Prostate gland (tissue), 2 donors: ENCODE measurements at regions of chr13 and their contacts with region 1.

Region 1: DNA sequence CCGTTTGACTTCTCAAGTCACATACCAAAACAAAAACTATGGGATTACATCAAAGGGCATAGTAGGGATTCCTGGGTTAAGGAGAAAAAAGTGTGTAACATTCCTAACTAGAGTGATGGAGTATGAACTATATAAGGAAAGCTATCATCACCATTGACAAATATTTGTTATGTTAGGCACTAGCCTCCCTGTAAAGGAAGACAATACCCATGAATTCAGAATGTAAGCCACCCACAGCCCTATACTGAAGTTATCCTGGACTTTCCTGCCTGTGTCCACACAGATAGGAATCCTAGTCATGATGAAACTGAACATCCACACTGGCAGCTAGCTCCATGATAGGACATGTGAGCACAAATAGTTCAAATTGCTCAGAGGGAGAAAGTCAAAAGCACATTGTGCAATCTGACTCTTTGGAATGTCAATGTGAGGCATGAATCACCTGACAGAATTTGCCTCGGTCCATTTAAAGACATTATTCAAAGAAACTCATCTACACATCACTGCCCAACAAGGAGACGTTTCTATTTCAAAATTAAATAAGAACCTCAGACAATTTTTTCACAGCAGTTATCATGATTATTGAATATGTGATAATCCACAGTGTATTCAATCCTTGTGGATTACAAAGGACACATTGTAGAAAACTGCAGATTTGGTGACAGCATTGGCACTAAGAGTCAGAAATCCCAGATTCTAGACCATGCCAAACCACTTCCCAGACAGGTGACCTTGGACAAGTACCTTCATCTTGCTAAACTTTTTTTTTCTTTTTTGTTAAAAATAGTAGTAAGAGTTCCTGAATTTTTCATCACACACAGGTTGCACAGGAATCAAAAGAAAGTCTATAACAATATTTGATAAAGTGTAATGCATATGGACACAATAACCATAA is 529.3 kb downstream of the IRS2 start:
- DNase-seq: peak; percentile 5
- H3K4me3 ChIP-seq: no peak overlapping the region
- H3K27ac ChIP-seq: peak overlapping the region in 1 of 2 donors; percentile 32
- H3K4me1 ChIP-seq: no peaks in the 10 kb centered on the region
- H3K27me3 ChIP-seq: no peaks in the 10 kb centered on the region
- CTCF ChIP-seq: no peak
- POLR2A ChIP-seq: no peak

Region 2: GRCh38 chr13:109010912-109011311 is 246.2 kb before region 1 on chr13:
- intact Hi-C with region 1: no loop called
- DNase-seq: no peak
- H3K4me3 ChIP-seq: no peak overlapping the region
- H3K27ac ChIP-seq: no peak overlapping the region
- H3K4me1 ChIP-seq: no peaks in the 10 kb centered on the region
- H3K27me3 ChIP-seq: no peaks in the 10 kb centered on the region
- CTCF ChIP-seq: no peak
- POLR2A ChIP-seq: no peak

Region 3: DNA sequence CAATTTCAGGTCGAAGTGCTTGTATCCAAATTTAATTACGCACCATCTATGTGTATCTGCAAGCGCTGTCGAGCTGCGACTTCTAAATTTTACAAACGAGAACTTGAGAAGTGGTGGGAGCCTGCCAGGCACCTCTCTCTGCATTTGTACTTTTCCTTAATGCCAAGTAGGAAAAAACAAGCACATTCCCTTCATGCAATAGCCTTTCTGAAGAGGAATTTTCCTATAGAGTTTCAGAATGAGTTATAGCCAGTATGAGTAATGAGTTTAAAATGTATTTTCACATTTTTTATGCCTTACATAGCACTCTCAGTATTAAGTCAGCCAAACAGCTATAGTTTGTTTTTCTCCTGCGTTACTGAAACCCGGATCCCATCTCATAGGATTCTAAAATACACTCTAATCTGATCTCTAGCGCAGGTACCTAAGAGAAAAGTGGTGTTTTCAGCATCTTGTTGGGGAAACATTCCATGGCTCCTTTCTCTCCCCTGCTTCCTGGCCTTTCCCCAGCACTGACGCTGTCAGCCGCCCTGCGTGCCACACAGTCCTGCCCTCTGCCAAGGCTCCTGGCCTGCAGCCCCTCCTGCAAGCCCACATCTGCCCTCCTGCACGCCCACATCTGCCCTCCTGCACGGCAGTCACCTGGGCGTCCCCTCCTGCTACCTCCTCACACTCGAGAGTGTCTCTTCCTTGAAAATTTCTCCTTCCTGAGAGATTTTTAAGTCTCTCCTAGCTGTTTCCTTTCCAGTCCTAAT is 100.8 kb before region 1 on chr13:
- intact Hi-C with region 1: loop called (anchors 5 kb)
- DNase-seq: peak; percentile 9
- H3K4me3 ChIP-seq: no peak overlapping the region
- H3K27ac ChIP-seq: peak overlapping the region; percentile 14 to 58
- H3K4me1 ChIP-seq: no peaks in the 10 kb centered on the region
- H3K27me3 ChIP-seq: no peaks in the 10 kb centered on the region
- CTCF ChIP-seq: no peak
- POLR2A ChIP-seq: no peak